Activated CD4-positive, alpha-beta memory T cell treated with anti-CD3 and anti-CD28 coated beads for 36 hours (primary cell): ENCODE measurements at regions of chr9 and their contacts with region 1.

Region 1: GRCh38 chr9:137618105-137619067 is at the start of gene EHMT1:
- DNase-seq: peak; percentile 93
- H3K4me3 Mint-ChIP-seq: peak within 1 kb of the TSS; percentile 85
- H3K27ac Mint-ChIP-seq: peak within 1 kb of the TSS; percentile 87
- H3K4me1 Mint-ChIP-seq: peaks cover 41% of the 10 kb centered on the region
- H3K27me3 Mint-ChIP-seq: no peaks in the 10 kb centered on the region
- total RNA-seq, gene EHMT1: 66.0 to 70.8 TPM

Region 2: GRCh38 chr9:137632230-137633161 is 14.1 kb after region 1 on chr9:
- CTCF ChIA-PET with region 1: interaction called, 3 read pairs
- POLR2A ChIA-PET with region 1: interaction called, 5 read pairs
- intact Hi-C with region 1: loop called (anchors 1 kb)
- DNase-seq: no peak
- H3K4me3 Mint-ChIP-seq: no peak overlapping the region
- H3K27ac Mint-ChIP-seq: no peak overlapping the region
- H3K4me1 Mint-ChIP-seq: peaks cover 57% of the 10 kb centered on the region
- H3K27me3 Mint-ChIP-seq: no peaks in the 10 kb centered on the region

Region 3: GRCh38 chr9:137639303-137640051 is 21.1 kb after region 1 on chr9:
- CTCF ChIA-PET with region 1: no interaction called
- POLR2A ChIA-PET with region 1: interaction called, 3 read pairs
- intact Hi-C with region 1: loop called (anchors 2 kb)
- DNase-seq: no peak
- H3K4me3 Mint-ChIP-seq: peak overlapping the region; percentile 68
- H3K27ac Mint-ChIP-seq: peak overlapping the region; percentile 79
- H3K4me1 Mint-ChIP-seq: peaks cover 44% of the 10 kb centered on the region
- H3K27me3 Mint-ChIP-seq: no peaks in the 10 kb centered on the region

Region 4: DNA sequence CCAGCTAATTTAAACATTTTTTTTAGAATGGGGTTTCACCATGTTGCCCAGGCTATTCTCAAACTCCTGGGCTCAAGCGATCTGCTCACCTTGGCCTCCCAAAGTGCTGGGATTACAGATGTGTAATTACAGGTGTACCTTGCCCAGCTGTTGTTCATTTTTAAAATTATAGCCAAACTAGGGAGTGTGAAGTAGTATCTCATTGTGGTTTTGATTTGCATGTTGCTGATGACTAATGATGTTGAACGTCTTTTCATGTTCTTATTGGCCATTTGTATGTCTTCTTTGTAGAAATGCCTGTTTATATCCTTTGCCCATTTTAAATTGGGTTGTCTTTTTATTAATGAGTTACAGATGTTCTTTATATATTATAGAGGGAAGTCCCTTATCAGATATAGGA is 31.9 kb after region 1 on chr9:
- CTCF ChIA-PET with region 1: no interaction called
- POLR2A ChIA-PET with region 1: no interaction called
- intact Hi-C with region 1: no loop called
- DNase-seq: no peak
- H3K4me3 Mint-ChIP-seq: no peak overlapping the region
- H3K27ac Mint-ChIP-seq: no peak overlapping the region
- H3K4me1 Mint-ChIP-seq: peaks cover 30% of the 10 kb centered on the region
- H3K27me3 Mint-ChIP-seq: no peaks in the 10 kb centered on the region